Dendritic cell treated with granulocyte-macrophage colony-stimulating factor and Interleukin-4, amounts not matched to agents 40 ng/mL and 50 ng/mL, for 4 days (primary cell): ENCODE measurements at regions of chrX and their contacts with region 1.

Region 1: GRCh38 chrX:2589186-2590030 is 88.6 kb upstream of the DHRSX start:
- H3K4me3 Mint-ChIP-seq: no peak overlapping the region
- H3K27ac Mint-ChIP-seq: no peak overlapping the region
- H3K4me1 Mint-ChIP-seq: peaks cover 12% of the 10 kb centered on the region
- H3K27me3 Mint-ChIP-seq: peaks cover 36% of the 10 kb centered on the region

Region 2: GRCh38 chrX:1649621-1650020 is 939.8 kb before region 1 on chrX:
- intact Hi-C with region 1: loop called (anchors 5 kb)
- H3K4me3 Mint-ChIP-seq: no peak overlapping the region
- H3K27ac Mint-ChIP-seq: no peak overlapping the region
- H3K4me1 Mint-ChIP-seq: no peaks in the 10 kb centered on the region
- H3K27me3 Mint-ChIP-seq: peaks cover 10% of the 10 kb centered on the region

Region 3: GRCh38 chrX:1673337-1673736 is 916.1 kb before region 1 on chrX:
- intact Hi-C with region 1: loop called (anchors 5 kb)
- H3K4me3 Mint-ChIP-seq: no peak overlapping the region
- H3K27ac Mint-ChIP-seq: no peak overlapping the region
- H3K4me1 Mint-ChIP-seq: no peaks in the 10 kb centered on the region
- H3K27me3 Mint-ChIP-seq: no peaks in the 10 kb centered on the region

Region 4: DNA sequence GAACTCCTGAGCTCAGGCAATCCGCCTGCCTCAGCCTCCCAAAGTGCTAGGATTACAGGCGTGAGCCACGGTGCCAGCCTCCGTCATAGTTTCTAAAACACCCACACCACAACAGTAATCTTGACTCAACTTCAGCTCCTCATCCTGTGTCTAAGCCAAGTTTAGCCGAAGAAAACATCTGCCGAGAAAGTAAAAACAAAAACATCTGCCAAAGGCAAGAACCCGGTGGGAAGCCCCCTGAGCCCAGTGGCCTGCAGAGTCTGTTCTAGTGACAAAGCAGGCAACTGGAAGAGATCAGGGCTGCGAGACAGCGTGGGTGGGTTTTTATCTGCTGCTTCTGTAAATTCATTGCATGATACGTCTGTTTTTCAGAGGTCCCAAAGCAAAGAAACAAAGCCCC is 75.1 kb after region 1 on chrX:
- intact Hi-C with region 1: no loop called
- H3K4me3 Mint-ChIP-seq: no peak overlapping the region
- H3K27ac Mint-ChIP-seq: no peak overlapping the region
- H3K4me1 Mint-ChIP-seq: peaks cover 10% of the 10 kb centered on the region
- H3K27me3 Mint-ChIP-seq: no peaks in the 10 kb centered on the region

Region 5: DNA sequence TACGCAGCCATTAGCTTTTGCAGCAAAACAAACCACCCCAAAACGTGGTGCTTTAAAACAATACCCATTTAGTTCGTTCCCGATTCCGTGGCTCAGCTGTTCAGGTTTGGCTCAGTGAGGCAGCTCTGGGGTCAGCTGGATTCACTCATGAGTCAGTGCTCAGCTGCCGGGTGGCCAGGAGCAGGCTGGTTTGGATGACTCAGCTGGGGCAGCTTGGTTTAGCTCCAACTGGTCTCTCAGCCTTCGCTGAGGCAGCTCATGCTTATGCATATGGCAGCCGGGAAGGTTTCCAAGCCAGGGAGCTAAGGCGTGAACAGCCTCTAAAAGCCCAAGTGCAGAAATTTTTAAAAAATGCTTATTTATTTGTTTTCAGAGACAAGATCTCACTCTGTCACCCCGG is 88.4 kb after region 1 on chrX:
- intact Hi-C with region 1: no loop called
- H3K4me3 Mint-ChIP-seq: no peak overlapping the region
- H3K27ac Mint-ChIP-seq: no peak overlapping the region
- H3K4me1 Mint-ChIP-seq: no peaks in the 10 kb centered on the region
- H3K27me3 Mint-ChIP-seq: no peaks in the 10 kb centered on the region